ENCODE measurements at regions of chr15 and their contacts with region 1.

Region 1: GRCh38 chr15:44711356-44712107 is at the start of gene B2M:
- DNase-seq: peak; percentile 85 to 99 (median 93)
- ATAC-seq: peak; percentile 76 to 87 (median 82)
- H3K4me3 ChIP-seq: peak within 1 kb of the TSS; percentile 89 to 96
- H3K4me3 Mint-ChIP-seq: peak within 1 kb of the TSS; percentile 95 to 100 (median 98)
- H3K27ac ChIP-seq: peak within 1 kb of the TSS; percentile 99
- H3K27ac Mint-ChIP-seq: peak within 1 kb of the TSS; percentile 100
- H3K4me1 ChIP-seq: peaks cover 32 to 35% of the 10 kb centered on the region in 2 experiments
- H3K4me1 Mint-ChIP-seq: peaks cover 46 to 84% (median 47%) of the 10 kb centered on the region in 3 donors
- H3K27me3 ChIP-seq: no peaks in the 10 kb centered on the region
- H3K27me3 Mint-ChIP-seq: no peaks in the 10 kb centered on the region
- total RNA-seq, gene B2M: 5,457 to 6,662 (median 6,121) TPM

Region 2: DNA sequence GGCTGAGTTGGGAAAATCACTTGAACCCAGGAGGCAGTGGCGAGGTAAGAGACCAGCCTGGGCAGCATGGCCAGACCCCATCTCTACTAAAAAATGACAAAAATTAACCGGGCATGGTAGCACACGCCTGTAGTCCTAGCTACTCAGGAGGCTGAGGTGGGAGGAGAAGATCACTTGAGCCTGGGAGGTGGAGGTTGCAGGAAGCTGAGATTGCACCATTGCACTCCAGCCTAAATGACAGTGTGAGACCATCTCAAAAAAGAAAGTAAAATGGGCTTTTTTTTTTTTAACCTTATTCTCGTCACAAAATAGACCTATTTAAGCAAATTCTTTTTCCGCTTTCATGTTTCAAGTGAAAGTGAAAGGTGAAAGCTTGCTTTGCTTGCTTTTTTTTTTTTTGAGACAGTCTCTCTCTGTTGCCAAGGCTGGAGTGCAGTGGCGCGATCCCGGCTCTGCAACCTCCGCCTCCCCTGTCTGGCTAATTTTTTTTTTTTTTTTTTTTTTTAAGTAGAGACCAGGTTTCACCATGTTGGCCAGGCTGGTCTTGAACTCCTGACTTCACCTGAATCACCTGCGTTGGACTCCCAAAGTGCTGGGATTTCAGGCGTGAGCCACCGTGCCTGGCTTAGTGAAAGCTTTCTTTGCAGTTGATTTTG is 961.7 kb before region 1 on chr15:
- CTCF ChIA-PET with region 1: no interaction called
- POLR2A ChIA-PET with region 1: interaction called in 1 of 2 experiments, 10 read pairs
- DNase-seq: peak in 29 of 35 experiments; percentile 4 to 84 (median 31)
- ATAC-seq: peak; percentile 11 to 61 (median 26)
- H3K4me3 ChIP-seq: peak overlapping the region; percentile 44 to 62
- H3K4me3 Mint-ChIP-seq: peak overlapping the region; percentile 74 to 96 (median 91)
- H3K27ac ChIP-seq: peak overlapping the region; percentile 80
- H3K27ac Mint-ChIP-seq: peak overlapping the region; percentile 85 to 91
- H3K4me1 ChIP-seq: peaks cover 21 to 55% of the 10 kb centered on the region in 2 experiments
- H3K4me1 Mint-ChIP-seq: peaks cover 63 to 74% (median 66%) of the 10 kb centered on the region in 3 donors
- H3K27me3 ChIP-seq: no peaks in the 10 kb centered on the region
- H3K27me3 Mint-ChIP-seq: no peaks in the 10 kb centered on the region

Region 3: GRCh38 chr15:44647036-44647435 is 64.5 kb before region 1 on chr15:
- CTCF ChIA-PET with region 1: no interaction called
- POLR2A ChIA-PET with region 1: interaction called in 1 of 2 experiments, 10 read pairs
- DNase-seq: no peak
- ATAC-seq: no peak
- H3K4me3 ChIP-seq: no peak overlapping the region
- H3K4me3 Mint-ChIP-seq: no peak overlapping the region
- H3K27ac ChIP-seq: no peak overlapping the region
- H3K27ac Mint-ChIP-seq: peak overlapping the region; percentile 34 to 50
- H3K4me1 ChIP-seq: peaks cover 3 to 10% of the 10 kb centered on the region in 2 experiments
- H3K4me1 Mint-ChIP-seq: peaks cover 60 to 66% (median 64%) of the 10 kb centered on the region in 3 donors
- H3K27me3 ChIP-seq: no peaks in the 10 kb centered on the region
- H3K27me3 Mint-ChIP-seq: no peaks in the 10 kb centered on the region

Region 4: GRCh38 chr15:44676676-44677075 is 34.9 kb before region 1 on chr15:
- CTCF ChIA-PET with region 1: interaction called in 1 of 2 experiments, 6 read pairs
- POLR2A ChIA-PET with region 1: interaction called, 3 to 21 read pairs
- DNase-seq: peak in 2 of 35 experiments; percentile 11 to 53
- ATAC-seq: peak in 3 of 4 experiments; percentile 11 to 18 (median 16)
- H3K4me3 ChIP-seq: peak overlapping the region; percentile 24 to 26
- H3K4me3 Mint-ChIP-seq: peak overlapping the region; percentile 58 to 69 (median 58)
- H3K27ac ChIP-seq: peak overlapping the region; percentile 82
- H3K27ac Mint-ChIP-seq: peak overlapping the region; percentile 96 to 98
- H3K4me1 ChIP-seq: peaks cover 60 to 98% of the 10 kb centered on the region in 2 experiments
- H3K4me1 Mint-ChIP-seq: peaks cover 88 to 92% (median 91%) of the 10 kb centered on the region in 3 donors
- H3K27me3 ChIP-seq: no peaks in the 10 kb centered on the region
- H3K27me3 Mint-ChIP-seq: no peaks in the 10 kb centered on the region

Region 5: DNA sequence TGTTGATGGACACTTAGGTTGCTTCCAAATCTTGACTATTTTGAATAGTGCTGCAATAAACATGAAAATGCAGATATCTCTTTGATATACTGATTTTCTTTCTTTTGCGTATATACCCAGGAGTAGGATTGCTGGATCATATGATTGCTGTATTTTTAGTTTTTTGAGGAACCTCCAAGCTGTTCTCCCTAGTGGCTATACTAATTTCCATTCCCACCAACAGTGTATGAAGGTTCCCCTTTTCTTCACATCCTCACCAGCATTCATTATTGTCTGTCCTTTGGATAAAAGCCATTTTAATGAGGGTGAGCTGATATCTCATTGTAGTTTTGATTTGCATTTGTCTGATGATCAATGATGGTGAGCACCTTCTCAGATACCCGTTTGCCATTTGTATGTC is 12.9 kb before region 1 on chr15:
- CTCF ChIA-PET with region 1: no interaction called
- POLR2A ChIA-PET with region 1: interaction called in 1 of 2 experiments, 17 read pairs
- DNase-seq: no peak
- ATAC-seq: no peak
- H3K4me3 ChIP-seq: no peak overlapping the region
- H3K4me3 Mint-ChIP-seq: no peak overlapping the region
- H3K27ac ChIP-seq: no peak overlapping the region
- H3K27ac Mint-ChIP-seq: peak overlapping the region in 1 of 2 donors; percentile 13
- H3K4me1 ChIP-seq: no peaks in the 10 kb centered on the region
- H3K4me1 Mint-ChIP-seq: peaks cover 21 to 36% (median 28%) of the 10 kb centered on the region in 3 donors
- H3K27me3 ChIP-seq: no peaks in the 10 kb centered on the region
- H3K27me3 Mint-ChIP-seq: no peaks in the 10 kb centered on the region

Region 6: DNA sequence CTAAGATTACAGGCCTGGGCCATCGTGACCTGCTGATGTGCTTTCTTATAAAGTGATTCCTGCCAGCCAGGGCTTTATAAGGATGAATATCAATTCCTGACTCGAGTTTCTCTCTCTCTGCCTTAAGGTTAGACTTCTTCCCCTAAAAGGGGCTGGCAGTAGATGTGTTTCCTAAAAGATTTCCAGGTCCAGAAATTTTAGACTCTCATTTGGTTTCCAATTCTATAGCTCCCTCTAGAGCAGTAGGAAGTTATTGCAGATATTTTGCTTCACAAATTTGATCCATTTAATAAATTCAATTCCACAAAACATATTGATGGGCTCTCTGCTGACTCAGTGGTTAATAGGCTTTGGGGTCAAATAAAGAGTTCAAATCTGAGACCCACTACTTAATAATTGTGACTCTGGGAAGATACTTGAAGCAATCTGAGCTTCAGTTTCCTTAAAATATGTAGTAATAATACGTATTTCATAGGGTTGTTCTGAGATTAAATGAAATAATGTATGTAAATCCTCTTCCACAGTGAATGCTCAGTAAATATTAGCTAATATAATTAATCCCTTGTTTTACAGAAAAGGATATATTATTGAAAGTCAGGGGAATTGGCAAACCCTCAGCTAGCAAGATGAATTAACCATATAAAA is 26.9 kb after region 1 on chr15:
- CTCF ChIA-PET with region 1: interaction called, 35 to 153 read pairs
- POLR2A ChIA-PET with region 1: interaction called, 77 to 132 read pairs
- DNase-seq: peak in 1 of 35 experiments; percentile 74
- ATAC-seq: no peak
- H3K4me3 ChIP-seq: no peak overlapping the region
- H3K4me3 Mint-ChIP-seq: peak overlapping the region in 2 of 3 donors; percentile 14 to 51
- H3K27ac ChIP-seq: peak overlapping the region; percentile 89
- H3K27ac Mint-ChIP-seq: peak overlapping the region; percentile 80 to 84
- H3K4me1 ChIP-seq: peaks cover 7 to 43% of the 10 kb centered on the region in 2 experiments
- H3K4me1 Mint-ChIP-seq: peaks cover 55 to 59% (median 58%) of the 10 kb centered on the region in 3 donors
- H3K27me3 ChIP-seq: no peaks in the 10 kb centered on the region
- H3K27me3 Mint-ChIP-seq: no peaks in the 10 kb centered on the region

Region 7: GRCh38 chr15:44775953-44776352 is 64.4 kb after region 1 on chr15:
- CTCF ChIA-PET with region 1: interaction called in 1 of 2 experiments, 10 read pairs
- POLR2A ChIA-PET with region 1: no interaction called
- DNase-seq: no peak
- ATAC-seq: no peak
- H3K4me3 ChIP-seq: no peak overlapping the region
- H3K4me3 Mint-ChIP-seq: no peak overlapping the region
- H3K27ac ChIP-seq: no peak overlapping the region
- H3K27ac Mint-ChIP-seq: no peak overlapping the region
- H3K4me1 ChIP-seq: no peaks in the 10 kb centered on the region
- H3K4me1 Mint-ChIP-seq: peaks cover 3 to 6% (median 5%) of the 10 kb centered on the region in 3 donors
- H3K27me3 ChIP-seq: no peaks in the 10 kb centered on the region
- H3K27me3 Mint-ChIP-seq: no peaks in the 10 kb centered on the region

Region 8: GRCh38 chr15:44909423-44909822 is 197.9 kb after region 1 on chr15:
- CTCF ChIA-PET with region 1: no interaction called
- POLR2A ChIA-PET with region 1: no interaction called
- DNase-seq: no peak
- ATAC-seq: no peak
- H3K4me3 ChIP-seq: no peak overlapping the region
- H3K4me3 Mint-ChIP-seq: no peak overlapping the region
- H3K27ac ChIP-seq: no peak overlapping the region
- H3K27ac Mint-ChIP-seq: no peak overlapping the region
- H3K4me1 ChIP-seq: no peaks in the 10 kb centered on the region
- H3K4me1 Mint-ChIP-seq: peaks cover 0 to 6% (median 3%) of the 10 kb centered on the region in 3 donors
- H3K27me3 ChIP-seq: peaks cover 0 to 3% of the 10 kb centered on the region in 2 experiments
- H3K27me3 Mint-ChIP-seq: peaks cover 0 to 4% of the 10 kb centered on the region in 2 donors